ENCODE measurements at regions of chr17 and their contacts with region 1.

Region 1: GRCh38 chr17:20121359-20122253 is 112.4 kb downstream of the SPECC1 start:
- DNase-seq: peak; percentile 32
- H3K4me3 Mint-ChIP-seq: no peak overlapping the region
- H3K27ac Mint-ChIP-seq: no peak overlapping the region
- H3K4me1 Mint-ChIP-seq: peaks cover 2% of the 10 kb centered on the region
- H3K27me3 Mint-ChIP-seq: peaks cover 15% of the 10 kb centered on the region

Region 2: DNA sequence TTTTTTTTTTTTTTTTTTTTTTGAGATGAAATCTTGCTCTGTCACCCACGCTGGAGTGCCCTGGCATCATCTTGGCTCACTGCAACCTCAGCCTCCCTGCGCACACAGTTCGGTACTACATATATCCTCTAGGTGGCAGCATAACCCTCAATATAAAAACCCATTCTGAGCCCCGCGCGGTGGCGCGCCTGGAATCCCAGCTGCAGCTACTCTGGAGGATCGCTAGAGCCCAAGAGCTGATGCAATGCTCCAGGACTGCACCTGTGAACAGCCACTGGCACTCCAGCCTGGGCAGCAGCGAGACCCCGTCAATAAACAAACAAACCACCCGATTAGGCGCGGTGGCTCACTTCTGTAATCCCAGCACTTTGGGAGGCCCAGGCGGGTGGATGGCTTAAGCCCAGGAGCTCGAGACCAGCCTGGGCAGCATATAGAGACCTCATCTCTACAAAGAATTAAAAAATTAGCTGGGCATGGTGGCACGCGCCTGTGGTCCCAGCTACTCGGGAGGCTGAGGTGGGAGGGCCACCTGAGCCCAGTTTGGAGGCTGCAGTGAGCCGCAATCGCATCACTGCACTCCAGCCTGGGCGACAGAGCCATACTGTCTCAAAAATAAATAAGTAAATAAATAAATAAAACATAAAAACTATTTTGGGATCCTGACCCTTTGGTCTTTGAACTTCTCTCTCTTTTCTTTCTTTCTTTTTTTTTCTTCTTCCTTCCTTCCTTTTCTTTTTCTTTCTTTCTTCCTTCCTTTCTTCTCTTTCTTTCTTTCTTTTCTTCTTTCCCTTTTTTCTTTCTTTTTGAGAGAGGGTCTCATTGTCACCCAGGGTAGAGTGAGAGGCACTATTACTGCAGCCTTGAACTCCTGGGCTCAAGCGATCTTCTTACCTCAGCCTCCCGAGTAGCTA is 128.5 kb before region 1 on chr17:
- intact Hi-C with region 1: loop called (anchors 1 kb)
- DNase-seq: peak; percentile 63
- H3K4me3 Mint-ChIP-seq: no peak overlapping the region
- H3K27ac Mint-ChIP-seq: no peak overlapping the region
- H3K4me1 Mint-ChIP-seq: peaks cover 7% of the 10 kb centered on the region
- H3K27me3 Mint-ChIP-seq: peaks cover 17% of the 10 kb centered on the region

Region 3: GRCh38 chr17:20226814-20227482 is 105.3 kb after region 1 on chr17:
- intact Hi-C with region 1: loop called (anchors 1 kb)
- DNase-seq: peak; percentile 74
- H3K4me3 Mint-ChIP-seq: no peak overlapping the region
- H3K27ac Mint-ChIP-seq: no peak overlapping the region
- H3K4me1 Mint-ChIP-seq: peaks cover 30% of the 10 kb centered on the region
- H3K27me3 Mint-ChIP-seq: peaks cover 1% of the 10 kb centered on the region

Region 4: DNA sequence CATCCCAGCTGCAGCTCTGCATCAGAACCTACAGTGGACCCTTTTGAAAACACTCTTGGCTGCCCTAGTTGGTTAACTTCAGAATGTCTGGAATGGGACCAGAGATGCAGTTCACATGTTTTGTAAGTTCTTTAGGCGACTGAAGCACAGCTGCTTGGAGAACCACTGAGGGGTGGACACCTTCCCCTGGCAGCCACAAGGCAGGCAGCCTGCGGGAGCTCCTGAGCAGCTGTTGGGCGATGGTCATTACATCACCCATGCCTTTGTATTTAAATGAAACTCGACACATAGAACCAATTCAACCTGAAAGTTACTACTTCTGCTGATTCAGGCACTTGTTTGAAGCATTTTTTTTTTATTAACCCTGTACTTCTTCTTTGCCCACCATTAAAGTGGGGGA is 194.2 kb after region 1 on chr17:
- intact Hi-C with region 1: loop called (anchors 2 kb)
- DNase-seq: no peak
- H3K4me3 Mint-ChIP-seq: no peak overlapping the region
- H3K27ac Mint-ChIP-seq: no peak overlapping the region
- H3K4me1 Mint-ChIP-seq: peaks cover under 1% of the 10 kb centered on the region
- H3K27me3 Mint-ChIP-seq: no peaks in the 10 kb centered on the region